Activated CD4-positive, alpha-beta T cell treated with anti-CD3 and anti-CD28 coated beads for 36 hours (primary cell): ENCODE measurements at regions of chr1 and their contacts with region 1.

Region 1: DNA sequence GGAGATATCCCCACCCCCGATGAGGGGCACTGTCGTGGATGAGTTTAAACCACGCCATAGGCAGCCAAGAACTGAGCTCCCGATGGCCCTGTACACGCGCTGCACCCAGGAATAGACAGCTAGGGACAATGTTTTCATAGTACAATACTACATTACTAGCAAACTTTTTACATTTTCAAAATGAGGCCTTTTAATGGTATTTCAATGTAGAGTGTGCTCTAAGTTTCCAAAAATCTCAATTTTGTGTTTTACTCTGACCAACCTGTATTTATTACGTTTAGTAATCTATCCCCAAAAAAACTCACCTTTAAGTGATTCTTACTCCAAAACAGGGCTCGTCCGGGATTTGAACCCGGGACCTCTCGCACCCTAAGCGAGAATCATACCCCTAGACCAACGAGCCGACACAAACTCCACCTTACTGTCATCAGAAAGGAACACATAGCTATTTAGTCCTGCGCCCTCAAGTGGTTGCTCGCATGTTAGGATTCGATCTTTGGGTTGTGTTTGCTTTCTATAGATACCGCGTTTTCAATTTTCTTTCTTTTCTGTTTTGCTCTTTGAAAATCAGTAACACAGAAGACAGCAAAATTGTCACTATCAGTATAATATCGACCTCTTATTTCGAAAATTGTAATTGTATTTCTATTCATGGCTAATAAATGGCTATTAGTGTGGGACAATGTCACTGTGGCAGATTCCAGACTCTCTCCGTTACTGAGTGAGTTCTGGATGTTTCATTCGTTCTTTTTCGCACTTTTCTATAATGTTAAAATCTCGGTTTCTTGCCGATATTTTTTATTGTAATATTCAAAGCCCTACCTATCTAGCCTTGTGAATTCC is 6.4 kb upstream of the MPZL1 start:
- DNase-seq: peak; percentile 91
- ATAC-seq: peak; percentile 49
- H3K4me3 Mint-ChIP-seq: peak overlapping the region; percentile 83
- H3K27ac Mint-ChIP-seq: peak overlapping the region; percentile 91
- H3K4me1 Mint-ChIP-seq: peaks cover 37% of the 10 kb centered on the region
- H3K27me3 Mint-ChIP-seq: no peaks in the 10 kb centered on the region

Region 2: GRCh38 chr1:167454894-167455785 is 260.2 kb before region 1 on chr1:
- CTCF ChIA-PET with region 1: no interaction called
- POLR2A ChIA-PET with region 1: no interaction called
- intact Hi-C with region 1: loop called in 1 of 2 experiments (anchors 5 kb)
- DNase-seq: peak; percentile 88
- ATAC-seq: peak; percentile 58
- H3K4me3 Mint-ChIP-seq: peak overlapping the region; percentile 75
- H3K27ac Mint-ChIP-seq: peak overlapping the region; percentile 86
- H3K4me1 Mint-ChIP-seq: peaks cover 78% of the 10 kb centered on the region
- H3K27me3 Mint-ChIP-seq: no peaks in the 10 kb centered on the region

Region 3: GRCh38 chr1:167627865-167628641 is 87.3 kb before region 1 on chr1:
- CTCF ChIA-PET with region 1: interaction called, 7 read pairs
- POLR2A ChIA-PET with region 1: no interaction called
- intact Hi-C with region 1: loop called in 1 of 2 experiments (anchors 1 kb)
- DNase-seq: peak; percentile 87
- ATAC-seq: peak; percentile 85
- H3K4me3 Mint-ChIP-seq: peak overlapping the region; percentile 85
- H3K27ac Mint-ChIP-seq: peak overlapping the region; percentile 98
- H3K4me1 Mint-ChIP-seq: peaks cover 53% of the 10 kb centered on the region
- H3K27me3 Mint-ChIP-seq: no peaks in the 10 kb centered on the region

Region 4: DNA sequence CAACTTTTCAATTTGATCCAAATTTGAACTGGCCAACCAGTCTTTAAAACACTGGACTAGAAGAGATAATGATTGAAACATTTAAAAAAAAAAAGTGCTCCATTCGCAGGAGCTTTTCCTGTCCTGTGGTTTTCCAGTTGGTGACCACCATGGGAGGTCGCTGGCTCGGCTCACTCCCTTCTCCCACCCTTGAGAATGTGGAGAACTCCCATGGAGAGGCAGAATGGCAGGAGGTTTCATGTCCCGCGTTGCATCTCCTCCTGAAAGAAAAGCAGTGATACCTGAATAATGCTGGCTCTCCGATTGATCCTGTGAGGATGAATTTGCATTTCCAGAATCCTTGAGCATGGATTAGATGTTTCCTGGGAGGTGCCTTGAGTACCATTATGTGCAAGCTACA is 10.1 kb before region 1 on chr1:
- CTCF ChIA-PET with region 1: interaction called, 15 read pairs
- POLR2A ChIA-PET with region 1: interaction called, 6 read pairs
- intact Hi-C with region 1: no loop called
- DNase-seq: no peak
- ATAC-seq: no peak
- H3K4me3 Mint-ChIP-seq: no peak overlapping the region
- H3K27ac Mint-ChIP-seq: no peak overlapping the region
- H3K4me1 Mint-ChIP-seq: peaks cover 25% of the 10 kb centered on the region
- H3K27me3 Mint-ChIP-seq: no peaks in the 10 kb centered on the region

Region 5: GRCh38 chr1:167936068-167936929 is 220.9 kb after region 1 on chr1 and contains the start of gene DCAF6:
- CTCF ChIA-PET with region 1: interaction called, 5 read pairs
- POLR2A ChIA-PET with region 1: interaction called, 3 read pairs
- intact Hi-C with region 1: loop called (anchors 1 to 5 kb)
- DNase-seq: peak; percentile 97
- ATAC-seq: peak; percentile 84
- H3K4me3 Mint-ChIP-seq: peak within 1 kb of the TSS; percentile 89
- H3K27ac Mint-ChIP-seq: peak within 1 kb of the TSS; percentile 97
- H3K4me1 Mint-ChIP-seq: peaks cover 34% of the 10 kb centered on the region
- H3K27me3 Mint-ChIP-seq: no peaks in the 10 kb centered on the region
- total RNA-seq, gene DCAF6: 25.6 to 28.8 TPM

Region 6: DNA sequence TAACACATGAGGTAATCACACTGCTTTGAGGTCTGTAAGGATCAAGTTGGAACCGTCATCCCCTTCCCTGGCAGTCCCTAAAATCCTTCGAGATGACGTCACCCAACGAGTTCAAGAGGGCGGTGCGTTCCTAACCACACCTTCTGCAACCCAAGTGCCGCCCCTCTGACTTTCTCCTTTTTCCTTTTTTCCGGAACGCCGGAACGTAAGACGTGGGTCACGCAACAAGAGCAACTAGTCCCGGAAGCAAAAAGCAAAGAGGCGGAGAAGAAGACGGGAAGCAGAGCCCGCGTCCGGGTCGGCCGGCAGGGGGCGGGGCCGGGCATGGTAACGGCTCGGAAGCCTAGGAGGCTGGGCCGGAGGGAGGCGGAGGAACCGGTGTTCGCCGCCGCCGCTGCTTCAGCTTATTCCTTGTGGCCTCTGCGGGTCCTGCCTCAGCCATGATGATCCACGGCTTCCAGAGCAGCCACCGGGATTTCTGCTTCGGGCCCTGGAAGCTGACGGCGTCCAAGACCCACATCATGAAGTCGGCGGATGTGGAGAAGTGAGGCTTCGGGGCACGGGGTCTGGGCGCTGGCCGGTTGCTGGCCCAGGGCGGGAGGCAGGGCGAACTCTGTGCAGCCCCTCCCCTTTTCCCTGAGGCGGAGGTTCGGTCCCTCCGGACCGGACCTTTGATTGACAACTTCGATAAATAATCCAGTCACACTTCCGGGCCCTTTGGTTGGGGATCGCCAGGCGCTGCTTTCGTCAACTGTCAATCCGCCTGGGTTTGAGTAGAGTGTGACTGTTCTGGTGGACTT is 463.5 kb after region 1 on chr1 and contains the start of gene TIPRL:
- CTCF ChIA-PET with region 1: no interaction called
- POLR2A ChIA-PET with region 1: no interaction called
- intact Hi-C with region 1: loop called in 1 of 2 experiments (anchors 2 kb)
- DNase-seq: peak; percentile 97
- ATAC-seq: peak; percentile 90
- H3K4me3 Mint-ChIP-seq: no peak within 1 kb of the TSS
- H3K27ac Mint-ChIP-seq: no peak within 1 kb of the TSS
- H3K4me1 Mint-ChIP-seq: peaks cover 9% of the 10 kb centered on the region
- H3K27me3 Mint-ChIP-seq: no peaks in the 10 kb centered on the region
- total RNA-seq, gene TIPRL: 52.5 to 57.5 TPM